Activated CD4-positive, alpha-beta T cell treated with anti-CD3 and anti-CD28 coated beads, Interleukin-2, amount 10 ng/mL, durations not matched to agents 24 days and 14 days (primary cell): ENCODE measurements at regions of chr6 and their contacts with region 1.

Region 1: DNA sequence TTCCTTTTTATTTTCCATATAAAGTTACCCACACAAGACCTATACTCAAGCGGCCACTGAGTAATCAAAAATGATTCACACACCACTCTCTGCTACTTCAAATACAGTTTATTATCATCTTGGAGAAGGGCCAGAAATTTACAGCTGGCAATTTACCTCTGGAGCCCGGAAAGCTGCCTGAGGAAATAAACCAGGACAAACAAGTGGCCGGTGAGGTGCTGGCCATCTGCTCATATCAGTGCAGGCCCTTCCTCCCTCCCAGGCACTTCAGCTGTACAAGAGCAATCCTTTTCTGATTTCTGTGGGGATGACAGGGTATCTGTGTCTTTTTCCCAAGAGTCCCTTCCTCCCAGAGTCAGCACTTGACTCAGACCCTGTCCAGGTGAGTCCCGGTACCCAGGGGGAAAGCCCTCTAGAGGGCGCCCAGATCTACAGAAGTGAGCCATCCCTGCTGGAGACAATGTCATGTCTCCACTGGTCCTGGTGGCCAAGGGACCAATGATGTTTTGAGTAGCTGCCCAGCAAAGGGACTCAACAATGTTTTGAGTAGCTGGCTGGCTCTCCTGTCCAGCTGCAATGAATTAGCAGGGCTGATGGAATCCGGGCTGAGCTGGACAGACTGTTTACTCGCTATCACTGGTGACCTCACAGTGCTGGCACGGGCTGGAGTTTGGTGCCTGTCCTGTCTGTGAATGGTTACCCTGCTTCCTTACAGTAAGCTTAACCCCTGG is 23.6 kb downstream of the LRP11 start:
- DNase-seq: peak; percentile 88
- H3K4me3 Mint-ChIP-seq: no peak overlapping the region
- H3K27ac Mint-ChIP-seq: no peak overlapping the region
- H3K4me1 Mint-ChIP-seq: no peaks in the 10 kb centered on the region
- H3K27me3 Mint-ChIP-seq: peaks cover 18% of the 10 kb centered on the region

Region 2: GRCh38 chr6:149043476-149044130 is 796.9 kb before region 1 on chr6:
- intact Hi-C with region 1: no loop called
- DNase-seq: peak; percentile 72
- H3K4me3 Mint-ChIP-seq: no peak overlapping the region
- H3K27ac Mint-ChIP-seq: no peak overlapping the region
- H3K4me1 Mint-ChIP-seq: peaks cover 61% of the 10 kb centered on the region
- H3K27me3 Mint-ChIP-seq: no peaks in the 10 kb centered on the region

Region 3: GRCh38 chr6:149771925-149772324 is 68.6 kb before region 1 on chr6:
- intact Hi-C with region 1: no loop called
- DNase-seq: no peak
- H3K4me3 Mint-ChIP-seq: no peak overlapping the region
- H3K27ac Mint-ChIP-seq: no peak overlapping the region
- H3K4me1 Mint-ChIP-seq: peaks cover 10% of the 10 kb centered on the region
- H3K27me3 Mint-ChIP-seq: no peaks in the 10 kb centered on the region

Region 4: DNA sequence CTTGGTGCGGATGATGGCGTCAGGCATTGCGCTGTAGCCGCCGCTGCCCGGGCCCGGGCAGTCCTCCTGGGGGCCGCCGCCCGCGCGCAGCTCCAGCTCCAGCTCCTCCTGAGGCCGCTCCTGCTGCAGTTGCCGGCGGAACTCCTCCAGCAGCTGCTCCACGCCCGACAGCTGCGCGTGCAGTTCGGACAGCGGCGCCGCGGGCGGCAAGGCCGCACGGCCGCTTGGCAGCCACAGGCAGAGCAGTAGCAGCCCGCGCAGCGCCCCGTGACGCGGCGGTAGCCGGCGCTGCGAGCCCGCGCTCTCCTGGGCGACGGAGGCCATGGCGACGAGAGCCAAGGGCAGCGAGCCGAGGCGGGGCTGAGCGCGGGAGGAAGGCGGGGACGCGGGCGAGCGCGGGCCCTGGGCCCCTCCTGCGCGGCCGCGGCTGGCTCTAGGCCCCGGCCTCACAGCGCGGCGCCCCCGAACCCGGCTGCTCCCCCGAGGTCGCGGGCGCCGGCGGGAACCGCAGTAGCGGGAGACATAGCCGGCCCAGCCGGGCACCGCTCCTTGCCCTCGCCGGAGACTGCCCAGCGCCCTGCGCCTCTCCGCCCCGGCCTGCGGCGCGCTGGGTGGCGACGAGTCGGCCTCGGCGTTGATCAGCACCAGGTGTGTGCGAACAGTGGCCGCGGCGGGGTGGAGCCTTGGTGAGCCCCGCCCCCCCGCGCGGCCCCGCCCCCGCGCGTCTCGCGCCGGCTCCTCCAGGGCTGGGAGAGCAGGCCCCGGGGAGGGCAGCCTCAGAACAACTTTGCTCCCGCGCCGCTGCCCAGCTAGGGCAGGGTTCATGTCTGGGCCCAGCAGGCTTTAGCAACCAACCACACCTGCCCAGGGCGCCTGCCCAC is 23.4 kb after region 1 on chr6 and contains the start of gene LRP11:
- intact Hi-C with region 1: loop called (anchors 1 kb)
- DNase-seq: peak; percentile 95
- H3K4me3 Mint-ChIP-seq: peak within 1 kb of the TSS; percentile 83
- H3K27ac Mint-ChIP-seq: no peak within 1 kb of the TSS
- H3K4me1 Mint-ChIP-seq: peaks cover 20% of the 10 kb centered on the region
- H3K27me3 Mint-ChIP-seq: peaks cover 33% of the 10 kb centered on the region
- total RNA-seq, gene LRP11: 3.7 TPM in 2 replicates

Region 5: GRCh38 chr6:150006961-150007464 is 166.5 kb after region 1 on chr6:
- intact Hi-C with region 1: no loop called
- DNase-seq: peak; percentile 80
- H3K4me3 Mint-ChIP-seq: no peak overlapping the region
- H3K27ac Mint-ChIP-seq: peak overlapping the region; percentile 1
- H3K4me1 Mint-ChIP-seq: peaks cover 37% of the 10 kb centered on the region
- H3K27me3 Mint-ChIP-seq: peaks cover 32% of the 10 kb centered on the region

Region 6: GRCh38 chr6:151290877-151291721 is 1450.6 kb after region 1 on chr6:
- intact Hi-C with region 1: no loop called
- DNase-seq: no peak
- H3K4me3 Mint-ChIP-seq: no peak overlapping the region
- H3K27ac Mint-ChIP-seq: no peak overlapping the region
- H3K4me1 Mint-ChIP-seq: peaks cover 19% of the 10 kb centered on the region
- H3K27me3 Mint-ChIP-seq: peaks cover 57% of the 10 kb centered on the region